H1 (cell line): ENCODE measurements at regions of chr12 and their contacts with region 1.

Region 1: DNA sequence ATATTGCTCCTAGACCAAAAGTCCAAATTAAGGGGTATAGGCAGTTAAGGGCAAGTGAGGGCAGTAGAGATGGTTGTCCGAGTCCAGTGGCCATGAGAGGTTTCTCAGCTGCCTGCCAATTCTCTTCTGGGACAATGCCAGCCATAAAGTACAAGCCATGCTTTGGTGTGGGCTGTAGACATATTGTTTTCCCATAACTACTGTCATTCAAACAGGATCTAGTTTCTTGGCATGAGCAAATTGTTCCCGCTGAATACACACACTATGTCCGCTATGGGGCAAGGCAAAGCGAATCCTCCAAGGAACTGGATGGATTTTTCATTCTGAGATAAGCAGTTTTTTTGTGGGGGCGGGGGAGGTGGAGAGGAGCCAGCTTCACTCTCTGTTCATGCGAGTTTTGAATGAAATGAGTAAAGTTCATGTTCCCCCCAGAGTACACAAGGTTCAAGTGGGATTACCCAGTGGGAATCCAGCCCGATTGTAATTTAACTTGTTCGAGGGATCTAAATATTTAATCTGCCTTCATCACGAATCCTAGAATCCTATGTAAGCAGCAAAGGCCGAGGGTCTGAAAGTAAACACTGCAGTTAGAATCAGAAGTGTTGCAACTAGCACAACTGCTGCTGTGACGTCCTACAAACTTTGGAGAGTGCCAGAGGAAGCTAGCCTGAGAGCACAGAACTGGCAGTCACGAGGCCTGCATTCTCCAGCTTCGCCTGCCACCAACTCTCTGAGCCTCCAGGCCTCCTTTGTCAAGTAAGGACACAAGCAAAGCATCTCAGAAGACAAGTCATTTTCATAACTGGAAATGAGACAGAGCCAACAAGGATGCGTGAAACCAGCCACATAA is 137.0 kb downstream of the CRADD start:
- DNase-seq: no peak
- H3K4me3 ChIP-seq: no peak overlapping the region
- H3K27ac ChIP-seq: no peak overlapping the region
- H3K4me1 ChIP-seq: peaks cover 0 to 6% (median 2%) of the 10 kb centered on the region in 4 experiments; a peak in 4 of 7 replicates
- H3K27me3 ChIP-seq: no peaks in the 10 kb centered on the region
- CTCF ChIP-seq: no peak
- EP300 ChIP-seq: no peak
- POLR2A ChIP-seq: no peak
- RAD21 ChIP-seq: no peak

Region 2: GRCh38 chr12:93766796-93767523 is 47.2 kb before region 1 on chr12:
- CTCF ChIA-PET with region 1: interaction called, 12 read pairs
- POLR2A ChIA-PET with region 1: no interaction called
- DNase-seq: no peak
- H3K4me3 ChIP-seq: no peak overlapping the region
- H3K27ac ChIP-seq: no peak overlapping the region
- H3K4me1 ChIP-seq: no peaks in the 10 kb centered on the region; a peak in 3 of 7 replicates
- H3K27me3 ChIP-seq: no peaks in the 10 kb centered on the region
- CTCF ChIP-seq: peak in 2 of 3 experiments; percentile 49 to 50; a peak in 2 of 4 replicates
- EP300 ChIP-seq: no peak
- POLR2A ChIP-seq: no peak
- RAD21 ChIP-seq: peak; percentile 69 to 80

Region 3: GRCh38 chr12:93802698-93803423 is 11.3 kb before region 1 on chr12:
- CTCF ChIA-PET with region 1: interaction called, 11 read pairs
- POLR2A ChIA-PET with region 1: interaction called, 3 read pairs
- DNase-seq: no peak
- H3K4me3 ChIP-seq: no peak overlapping the region
- H3K27ac ChIP-seq: no peak overlapping the region
- H3K4me1 ChIP-seq: peaks cover 0 to 7% (median 2%) of the 10 kb centered on the region in 4 experiments; a peak in 4 of 7 replicates
- H3K27me3 ChIP-seq: no peaks in the 10 kb centered on the region
- CTCF ChIP-seq: peak in 2 of 3 experiments; percentile 5 to 30; a peak in 2 of 4 replicates
- EP300 ChIP-seq: no peak
- POLR2A ChIP-seq: no peak
- RAD21 ChIP-seq: peak; percentile 53 to 63

Region 4: DNA sequence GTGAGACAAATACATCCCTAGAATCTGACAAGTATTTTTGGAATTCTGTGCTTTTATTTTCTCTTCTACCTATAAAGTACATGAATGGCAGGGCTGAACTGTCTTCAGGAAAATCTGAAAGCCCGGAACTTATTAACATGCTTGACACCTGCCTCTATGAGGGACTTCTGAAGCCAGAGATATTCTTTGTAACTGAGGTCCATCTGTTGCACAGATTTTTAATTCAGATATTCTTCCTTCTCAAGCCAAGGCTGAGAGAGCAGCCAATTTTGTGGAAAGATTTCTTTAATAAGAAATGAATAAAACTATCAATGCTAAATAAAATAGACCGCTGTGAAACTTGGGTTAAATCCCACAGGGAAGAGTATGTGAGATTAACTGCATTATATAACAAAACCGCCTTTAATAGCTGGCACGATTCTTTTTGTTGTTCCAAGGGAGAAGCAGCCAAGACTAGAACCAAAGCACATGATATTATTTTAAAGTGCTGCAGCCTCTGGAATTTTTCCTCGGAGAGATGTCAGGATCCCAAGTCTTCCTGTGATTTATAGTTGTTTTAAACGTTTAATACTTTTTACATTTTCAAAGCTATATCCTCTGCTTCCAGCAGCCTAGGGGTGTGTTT is 11.8 kb after region 1 on chr12:
- CTCF ChIA-PET with region 1: interaction called, 10 read pairs
- POLR2A ChIA-PET with region 1: no interaction called
- DNase-seq: no peak
- H3K4me3 ChIP-seq: no peak overlapping the region
- H3K27ac ChIP-seq: no peak overlapping the region
- H3K4me1 ChIP-seq: peaks cover 2 to 10% (median 6%) of the 10 kb centered on the region in 4 experiments; a peak in 5 of 7 replicates
- H3K27me3 ChIP-seq: no peaks in the 10 kb centered on the region; a peak in 1 of 7 replicates
- CTCF ChIP-seq: no peak
- EP300 ChIP-seq: no peak
- POLR2A ChIP-seq: no peak
- RAD21 ChIP-seq: no peak